Caco-2 (cell line): ENCODE measurements at regions of chr10 and their contacts with region 1.

Region 1: GRCh38 chr10:70146489-70147258 is at the start of gene TYSND1:
- DNase-seq: peak; percentile 100
- H3K4me3 ChIP-seq: peak within 1 kb of the TSS; percentile 74
- H3K4me3 Mint-ChIP-seq: peak within 1 kb of the TSS; percentile 98
- H3K27ac Mint-ChIP-seq: peak within 1 kb of the TSS; percentile 68
- H3K4me1 ChIP-seq: peaks cover 15% of the 10 kb centered on the region; the same call in 1 of the 2 replicates
- H3K4me1 Mint-ChIP-seq: peaks cover 8% of the 10 kb centered on the region
- H3K27me3 ChIP-seq: no peaks in the 10 kb centered on the region
- H3K27me3 Mint-ChIP-seq: no peaks in the 10 kb centered on the region
- CTCF ChIP-seq: peak; percentile 67 to 98
- total RNA-seq, gene TYSND1: 29.4 and 29.8 TPM in 2 replicates

Region 2: GRCh38 chr10:69957886-69958555 is 188.7 kb before region 1 on chr10:
- CTCF ChIA-PET with region 1: interaction called, 16 read pairs
- POLR2A ChIA-PET with region 1: interaction called, 3 read pairs
- intact Hi-C with region 1: no loop called
- DNase-seq: peak; percentile 49 to 74
- H3K4me3 ChIP-seq: no peak overlapping the region
- H3K4me3 Mint-ChIP-seq: no peak overlapping the region
- H3K27ac Mint-ChIP-seq: no peak overlapping the region
- H3K4me1 ChIP-seq: no peaks in the 10 kb centered on the region
- H3K4me1 Mint-ChIP-seq: no peaks in the 10 kb centered on the region
- H3K27me3 ChIP-seq: peaks cover 3% of the 10 kb centered on the region
- H3K27me3 Mint-ChIP-seq: peaks cover 32% of the 10 kb centered on the region
- CTCF ChIP-seq: peak; percentile 93 to 97

Region 3: DNA sequence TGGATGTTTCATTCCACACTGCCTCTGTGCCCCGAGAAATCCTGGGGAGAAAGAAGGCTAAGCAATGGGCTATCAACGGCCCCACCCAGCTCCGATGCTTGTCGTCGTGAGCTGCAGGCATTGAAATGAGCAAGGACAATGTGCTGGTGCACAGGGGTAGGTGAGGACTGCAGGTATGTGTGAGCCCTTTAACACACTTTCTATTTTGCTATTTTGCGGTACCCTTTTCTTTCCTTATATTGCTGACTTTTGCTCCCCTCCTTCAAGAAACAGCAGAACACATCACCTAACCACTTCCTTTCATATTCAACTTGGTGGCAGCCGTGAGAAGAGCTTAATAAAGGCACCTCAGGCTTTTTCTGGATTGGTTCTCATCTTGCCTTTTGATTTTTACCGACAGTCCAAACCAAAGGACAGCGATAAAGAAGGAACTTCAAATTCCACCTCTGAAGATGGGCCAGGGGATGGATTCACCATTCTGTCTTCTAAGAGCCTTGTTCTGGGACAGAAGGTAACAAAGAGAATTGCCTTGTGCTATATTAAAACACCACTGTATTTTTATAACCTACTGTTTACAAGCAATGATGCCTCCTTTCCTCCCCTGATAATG is 53.2 kb before region 1 on chr10:
- CTCF ChIA-PET with region 1: interaction called, 54 read pairs
- POLR2A ChIA-PET with region 1: interaction called, 22 read pairs
- intact Hi-C with region 1: no loop called
- DNase-seq: no peak
- H3K4me3 ChIP-seq: no peak overlapping the region
- H3K4me3 Mint-ChIP-seq: no peak overlapping the region
- H3K27ac Mint-ChIP-seq: peak overlapping the region; percentile 43
- H3K4me1 ChIP-seq: peaks cover 54% of the 10 kb centered on the region
- H3K4me1 Mint-ChIP-seq: peaks cover 45% of the 10 kb centered on the region
- H3K27me3 ChIP-seq: no peaks in the 10 kb centered on the region
- H3K27me3 Mint-ChIP-seq: no peaks in the 10 kb centered on the region
- CTCF ChIP-seq: no peak

Region 4: DNA sequence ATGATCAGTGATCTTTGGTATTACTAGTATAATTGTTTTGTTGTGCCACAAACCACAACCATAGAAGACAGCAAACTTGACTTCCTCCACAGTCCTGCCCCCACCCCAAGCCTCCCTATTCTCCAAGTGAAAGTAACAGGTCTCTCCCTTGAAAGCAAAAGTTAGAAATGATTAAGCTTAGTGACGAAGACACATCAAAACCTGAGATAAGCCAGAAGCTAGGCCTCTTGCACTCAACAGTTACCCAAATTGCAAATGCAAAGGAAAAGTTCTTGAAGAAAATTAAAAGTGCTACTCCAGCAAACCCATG is 16.2 kb after region 1 on chr10:
- CTCF ChIA-PET with region 1: interaction called, 26 read pairs
- POLR2A ChIA-PET with region 1: interaction called, 4 read pairs
- intact Hi-C with region 1: no loop called
- DNase-seq: no peak
- H3K4me3 ChIP-seq: no peak overlapping the region
- H3K4me3 Mint-ChIP-seq: no peak overlapping the region
- H3K27ac Mint-ChIP-seq: no peak overlapping the region
- H3K4me1 ChIP-seq: no peaks in the 10 kb centered on the region; the same call in 1 of the 2 replicates
- H3K4me1 Mint-ChIP-seq: peaks cover 32% of the 10 kb centered on the region
- H3K27me3 ChIP-seq: no peaks in the 10 kb centered on the region
- H3K27me3 Mint-ChIP-seq: no peaks in the 10 kb centered on the region
- CTCF ChIP-seq: no peak

Region 5: GRCh38 chr10:70183304-70183703 is 36.6 kb after region 1 on chr10:
- CTCF ChIA-PET with region 1: no interaction called
- POLR2A ChIA-PET with region 1: no interaction called
- intact Hi-C with region 1: no loop called
- DNase-seq: no peak
- H3K4me3 ChIP-seq: no peak overlapping the region
- H3K4me3 Mint-ChIP-seq: no peak overlapping the region
- H3K27ac Mint-ChIP-seq: no peak overlapping the region
- H3K4me1 ChIP-seq: no peaks in the 10 kb centered on the region
- H3K4me1 Mint-ChIP-seq: no peaks in the 10 kb centered on the region
- H3K27me3 ChIP-seq: no peaks in the 10 kb centered on the region
- H3K27me3 Mint-ChIP-seq: peaks cover 8% of the 10 kb centered on the region
- CTCF ChIP-seq: no peak

Region 6: GRCh38 chr10:70221030-70221429 is 74.4 kb after region 1 on chr10:
- CTCF ChIA-PET with region 1: interaction called, 26 read pairs
- POLR2A ChIA-PET with region 1: interaction called, 6 read pairs
- intact Hi-C with region 1: loop called (anchors 2 kb)
- DNase-seq: no peak
- H3K4me3 ChIP-seq: no peak overlapping the region
- H3K4me3 Mint-ChIP-seq: no peak overlapping the region
- H3K27ac Mint-ChIP-seq: peak overlapping the region; percentile 19
- H3K4me1 ChIP-seq: peaks cover 12% of the 10 kb centered on the region; the same call in 1 of the 2 replicates
- H3K4me1 Mint-ChIP-seq: peaks cover 14% of the 10 kb centered on the region
- H3K27me3 ChIP-seq: no peaks in the 10 kb centered on the region
- H3K27me3 Mint-ChIP-seq: no peaks in the 10 kb centered on the region
- CTCF ChIP-seq: no peak

Region 7: GRCh38 chr10:70381471-70382421 is 235.1 kb after region 1 on chr10:
- CTCF ChIA-PET with region 1: interaction called, 28 read pairs
- POLR2A ChIA-PET with region 1: interaction called, 12 read pairs
- intact Hi-C with region 1: loop called (anchors 2 kb)
- DNase-seq: peak; percentile 65 to 72
- H3K4me3 ChIP-seq: peak overlapping the region; percentile 73
- H3K4me3 Mint-ChIP-seq: peak overlapping the region; percentile 83
- H3K27ac Mint-ChIP-seq: peak overlapping the region; percentile 61
- H3K4me1 ChIP-seq: peaks cover 38% of the 10 kb centered on the region
- H3K4me1 Mint-ChIP-seq: peaks cover 21% of the 10 kb centered on the region
- H3K27me3 ChIP-seq: no peaks in the 10 kb centered on the region
- H3K27me3 Mint-ChIP-seq: no peaks in the 10 kb centered on the region
- CTCF ChIP-seq: no peak